Heart right ventricle (tissue), 16 donors: ENCODE measurements at regions of chr7 and their contacts with region 1.

Region 1: DNA sequence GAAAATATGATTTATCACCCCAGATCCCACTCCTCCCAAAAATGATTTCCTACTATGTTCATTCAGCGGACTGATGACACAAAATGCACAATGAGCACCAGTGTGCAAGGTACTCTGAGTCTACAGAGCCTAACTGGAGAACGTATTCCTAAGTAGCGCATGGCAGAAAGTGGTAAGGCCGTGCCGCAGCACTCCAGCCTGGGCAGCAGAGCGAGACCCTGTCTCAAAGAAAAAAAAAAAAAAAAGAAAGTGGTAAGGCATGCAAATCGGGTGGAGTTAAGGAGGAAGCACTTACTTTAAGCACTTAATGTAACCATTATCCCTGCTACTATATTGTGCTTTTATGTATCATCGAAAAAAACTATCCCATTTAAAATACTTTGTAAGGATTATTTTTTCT is 25.5 kb downstream of the CYP51A1 start:
- DNase-seq: no peak
- ATAC-seq: no peak
- H3K4me3 ChIP-seq: no peak overlapping the region
- H3K27ac ChIP-seq: no peak overlapping the region
- H3K4me1 ChIP-seq: peaks cover 0 to 11% (median 0%) of the 10 kb centered on the region in 9 donors
- H3K27me3 ChIP-seq: no peaks in the 10 kb centered on the region
- CTCF ChIP-seq: no peak

Region 2: DNA sequence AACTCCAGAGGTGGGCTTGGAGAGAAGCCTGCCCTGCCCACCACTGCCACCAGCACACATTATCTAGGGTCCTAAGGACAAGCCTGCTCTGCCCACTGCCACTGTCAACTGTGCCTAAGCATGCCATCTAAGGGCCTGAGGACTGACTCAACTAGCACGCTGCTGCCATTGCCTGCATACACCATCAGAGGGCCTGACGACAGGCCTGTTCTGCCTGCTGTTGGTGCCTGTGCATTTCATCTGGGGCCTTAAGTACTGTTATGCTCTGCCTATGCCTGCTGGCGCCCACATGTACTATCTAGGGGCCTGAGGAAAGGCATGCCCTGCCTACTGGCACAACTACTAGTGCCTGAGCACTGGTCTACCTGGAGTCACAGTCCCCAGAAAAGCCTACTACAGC is 97.2 kb after region 1 on chr7:
- intact Hi-C with region 1: loop called in 2 of 10 experiments (anchors 10 kb)
- DNase-seq: no peak
- ATAC-seq: no peak
- H3K4me3 ChIP-seq: no peak overlapping the region
- H3K27ac ChIP-seq: no peak overlapping the region
- H3K4me1 ChIP-seq: no peaks in the 10 kb centered on the region
- H3K27me3 ChIP-seq: no peaks in the 10 kb centered on the region
- CTCF ChIP-seq: no peak